Ascending aorta (tissue), 2 donors: ENCODE measurements at regions of chr10 and their contacts with region 1.

Region 1: DNA sequence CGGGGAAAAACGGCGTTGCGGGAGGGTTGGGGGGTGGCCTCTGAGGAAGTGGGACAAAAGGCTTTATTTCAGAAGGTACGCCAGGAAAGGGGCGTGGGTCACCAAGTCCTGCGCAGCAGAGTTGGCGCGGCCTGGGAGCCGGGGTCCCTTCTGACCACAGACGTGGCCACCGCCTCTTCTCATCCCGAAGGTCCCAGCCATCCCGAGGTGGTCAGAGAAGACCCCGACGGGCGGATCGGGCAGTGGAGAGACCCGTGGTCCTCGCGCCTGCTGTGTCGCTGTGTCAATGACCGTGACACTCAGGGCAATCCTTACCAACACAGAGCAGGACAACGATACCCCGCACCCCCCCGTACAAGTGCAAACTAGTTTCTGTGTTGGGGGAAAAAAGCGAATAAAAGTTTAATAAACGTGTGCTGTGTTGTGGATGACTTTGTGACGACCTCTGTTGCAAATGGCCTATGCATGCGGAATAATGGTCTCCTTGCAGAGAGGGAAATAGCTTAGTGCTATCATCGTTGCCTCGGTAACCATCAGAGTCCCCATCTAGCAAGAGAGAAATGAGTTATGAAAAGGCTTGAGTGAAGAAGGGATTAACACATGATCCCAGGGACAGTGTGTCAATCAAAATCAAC is 19.4 kb upstream of the GATA3 start:
- DNase-seq: peak in 1 of 2 donors; percentile 55
- H3K4me3 ChIP-seq: peak overlapping the region; percentile 29 to 49
- H3K27ac ChIP-seq: no peak overlapping the region
- H3K4me1 ChIP-seq: peaks cover 6 to 15% of the 10 kb centered on the region in 2 donors
- H3K27me3 ChIP-seq: peaks cover 27% of the 10 kb centered on the region
- CTCF ChIP-seq: no peak

Region 2: GRCh38 chr10:7797582-7797981 is 237.5 kb before region 1 on chr10:
- intact Hi-C with region 1: no loop called
- DNase-seq: no peak
- H3K4me3 ChIP-seq: no peak overlapping the region
- H3K27ac ChIP-seq: no peak overlapping the region
- H3K4me1 ChIP-seq: peaks cover 0 to 6% of the 10 kb centered on the region in 2 donors
- H3K27me3 ChIP-seq: no peaks in the 10 kb centered on the region
- CTCF ChIP-seq: no peak

Region 3: GRCh38 chr10:8050556-8051108 is 15.5 kb after region 1 on chr10:
- intact Hi-C with region 1: loop called (anchors 2 kb)
- DNase-seq: no peak
- H3K4me3 ChIP-seq: peak overlapping the region; percentile 63
- H3K27ac ChIP-seq: no peak overlapping the region
- H3K4me1 ChIP-seq: peaks cover 25 to 31% of the 10 kb centered on the region in 2 donors
- H3K27me3 ChIP-seq: peaks cover 68% of the 10 kb centered on the region
- CTCF ChIP-seq: no peak

Region 4: DNA sequence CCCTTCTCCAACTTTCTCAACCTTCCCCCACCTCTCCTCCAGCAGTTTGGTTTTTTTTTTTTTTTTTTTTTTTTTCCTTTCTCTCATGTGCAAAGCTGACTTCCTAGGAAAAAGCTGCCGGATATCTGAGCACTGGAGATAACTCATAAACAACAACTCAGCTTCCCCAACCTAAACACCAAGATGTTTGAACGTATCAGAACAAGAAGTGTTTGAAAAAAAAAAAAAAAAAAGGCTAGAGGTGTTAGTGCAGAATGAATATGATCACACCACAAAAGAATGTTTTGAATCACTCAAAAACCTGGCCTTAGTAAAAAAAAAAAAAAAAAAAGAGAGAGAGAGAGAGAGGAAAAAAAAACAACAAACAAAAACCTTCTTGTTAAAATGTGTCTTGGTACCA is 30.5 kb after region 1 on chr10:
- intact Hi-C with region 1: no loop called
- DNase-seq: no peak
- H3K4me3 ChIP-seq: no peak overlapping the region
- H3K27ac ChIP-seq: no peak overlapping the region
- H3K4me1 ChIP-seq: no peaks in the 10 kb centered on the region
- H3K27me3 ChIP-seq: no peaks in the 10 kb centered on the region
- CTCF ChIP-seq: no peak